Activated CD8-positive, alpha-beta memory T cell treated with anti-CD3 and anti-CD28 coated beads, Interleukin-2, amount 10 ng/mL, durations not matched to agents 7 days and 5 days (primary cell): ENCODE measurements at regions of chr11 and their contacts with region 1.

Region 1: DNA sequence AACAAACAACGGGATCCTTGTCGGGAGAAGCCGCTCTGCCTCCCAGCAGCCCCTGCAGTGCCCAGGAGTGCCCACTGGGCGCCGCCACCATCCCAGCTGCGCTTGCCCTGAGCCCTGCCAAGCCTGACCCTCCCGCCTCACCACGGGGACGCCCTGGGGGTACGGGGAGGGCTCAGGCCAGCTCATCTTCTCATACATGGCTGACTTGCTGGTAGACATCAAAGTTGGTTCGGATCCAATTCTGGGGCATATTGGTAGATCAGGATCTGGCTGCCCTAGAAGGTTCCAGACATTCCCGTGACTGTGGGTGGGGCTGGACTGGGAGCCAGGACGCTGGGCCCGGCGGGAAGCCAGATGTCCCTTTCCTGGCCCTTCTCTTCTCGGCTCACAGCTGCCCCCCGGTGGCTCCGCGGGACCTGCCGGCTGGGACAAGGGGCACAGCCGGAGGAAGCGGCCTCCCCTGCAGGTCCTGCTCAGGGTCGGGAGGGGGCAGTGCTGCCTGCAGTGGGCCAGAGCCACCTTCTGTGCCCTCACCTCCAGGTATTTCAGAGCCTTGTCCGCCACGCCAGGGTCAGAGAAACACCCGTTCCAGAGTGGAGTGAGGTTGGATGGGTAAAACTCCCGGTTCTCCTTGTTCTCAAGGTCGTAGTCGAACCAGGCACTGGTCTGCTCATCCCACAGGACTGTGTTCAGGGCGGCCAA is 10.6 kb upstream of the TREH start:
- DNase-seq: peak; percentile 90
- ATAC-seq: peak; percentile 94
- H3K4me3 Mint-ChIP-seq: peak overlapping the region; percentile 69
- H3K27ac Mint-ChIP-seq: peak overlapping the region; percentile 62
- H3K4me1 Mint-ChIP-seq: peaks cover 44% of the 10 kb centered on the region
- H3K27me3 Mint-ChIP-seq: peaks cover 21% of the 10 kb centered on the region

Region 2: GRCh38 chr11:118679483-118679882 is 10.5 kb before region 1 on chr11 and contains the start of gene TREH:
- CTCF ChIA-PET with region 1: interaction called, 16 read pairs
- DNase-seq: no peak
- ATAC-seq: no peak
- H3K4me3 Mint-ChIP-seq: no peak within 1 kb of the TSS
- H3K27ac Mint-ChIP-seq: no peak within 1 kb of the TSS
- H3K4me1 Mint-ChIP-seq: no peaks in the 10 kb centered on the region
- H3K27me3 Mint-ChIP-seq: peaks cover 20% of the 10 kb centered on the region
- total RNA-seq, gene TREH: not detected

Region 3: GRCh38 chr11:118744046-118744445 is 54.0 kb after region 1 on chr11:
- CTCF ChIA-PET with region 1: interaction called, 16 read pairs
- DNase-seq: no peak
- ATAC-seq: no peak
- H3K4me3 Mint-ChIP-seq: no peak overlapping the region
- H3K27ac Mint-ChIP-seq: no peak overlapping the region
- H3K4me1 Mint-ChIP-seq: no peaks in the 10 kb centered on the region
- H3K27me3 Mint-ChIP-seq: peaks cover 2% of the 10 kb centered on the region

Region 4: GRCh38 chr11:118870396-118871345 is 180.7 kb after region 1 on chr11:
- CTCF ChIA-PET with region 1: interaction called, 12 read pairs
- DNase-seq: peak; percentile 66
- ATAC-seq: peak; percentile 37
- H3K4me3 Mint-ChIP-seq: peak overlapping the region; percentile 51
- H3K27ac Mint-ChIP-seq: peak overlapping the region; percentile 92
- H3K4me1 Mint-ChIP-seq: peaks cover 55% of the 10 kb centered on the region
- H3K27me3 Mint-ChIP-seq: no peaks in the 10 kb centered on the region

Region 5: GRCh38 chr11:118907051-118908042 is 217.3 kb after region 1 on chr11:
- CTCF ChIA-PET with region 1: interaction called, 21 read pairs
- DNase-seq: peak; percentile 91
- ATAC-seq: peak; percentile 79
- H3K4me3 Mint-ChIP-seq: no peak overlapping the region
- H3K27ac Mint-ChIP-seq: no peak overlapping the region
- H3K4me1 Mint-ChIP-seq: peaks cover 27% of the 10 kb centered on the region
- H3K27me3 Mint-ChIP-seq: no peaks in the 10 kb centered on the region

Region 6: GRCh38 chr11:118939953-118940598 is 250.1 kb after region 1 on chr11:
- CTCF ChIA-PET with region 1: interaction called, 11 read pairs
- DNase-seq: peak; percentile 69
- ATAC-seq: peak; percentile 82
- H3K4me3 Mint-ChIP-seq: no peak overlapping the region
- H3K27ac Mint-ChIP-seq: peak overlapping the region; percentile 32
- H3K4me1 Mint-ChIP-seq: peaks cover 28% of the 10 kb centered on the region
- H3K27me3 Mint-ChIP-seq: peaks cover 8% of the 10 kb centered on the region

Region 7: GRCh38 chr11:118997627-118998387 is 307.8 kb after region 1 on chr11 and contains the start of gene CENATAC:
- CTCF ChIA-PET with region 1: interaction called, 11 read pairs
- DNase-seq: peak; percentile 98
- ATAC-seq: peak; percentile 97
- H3K4me3 Mint-ChIP-seq: peak within 1 kb of the TSS; percentile 97
- H3K27ac Mint-ChIP-seq: peak within 1 kb of the TSS; percentile 97
- H3K4me1 Mint-ChIP-seq: peaks cover 33% of the 10 kb centered on the region
- H3K27me3 Mint-ChIP-seq: no peaks in the 10 kb centered on the region
- total RNA-seq, gene CENATAC: 43.4 to 47.1 TPM